Activated naive CD4-positive, alpha-beta T cell treated with anti-CD3 and anti-CD28 coated beads for 36 hours (primary cell): ENCODE measurements at regions of chr1 and their contacts with region 1.

Region 1: DNA sequence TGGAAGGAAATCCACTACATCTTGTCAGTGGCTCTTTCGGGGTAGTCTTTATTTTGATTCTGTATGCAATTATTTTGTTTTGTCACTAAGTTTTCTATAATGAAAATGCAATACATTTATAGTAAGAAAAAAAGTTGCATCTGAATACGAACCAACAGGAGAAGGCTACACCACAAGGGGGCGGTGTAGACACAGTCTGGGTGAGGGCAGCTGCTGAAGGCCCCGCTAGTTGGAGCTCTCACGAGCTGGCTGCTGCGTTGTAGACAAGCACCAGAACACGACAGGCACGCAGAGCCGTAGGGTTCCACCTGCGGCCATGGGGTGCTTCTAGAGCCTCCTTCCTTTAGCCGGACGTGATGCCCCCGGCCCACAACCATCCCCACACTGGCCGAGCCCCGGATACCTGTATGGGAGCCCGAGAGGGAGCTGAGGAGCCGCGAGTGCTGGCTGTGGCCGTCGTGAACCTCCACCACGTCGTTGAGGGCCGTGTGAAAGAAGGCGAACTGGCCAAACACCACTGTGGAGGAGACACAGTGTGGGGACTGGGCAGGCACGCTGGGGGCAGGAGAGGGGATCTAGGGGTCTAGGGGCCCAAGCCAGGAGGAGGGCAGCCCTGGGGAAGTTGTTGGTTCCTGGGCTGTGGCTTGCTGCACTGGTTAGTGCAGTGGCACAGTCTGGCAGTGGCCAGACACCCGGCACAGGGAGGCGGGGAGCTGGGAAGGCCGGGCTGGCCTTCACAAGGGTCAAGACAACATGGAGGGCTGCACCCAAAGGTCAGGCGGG is 160.8 kb downstream of the ZSCAN20 start:
- DNase-seq: peak; percentile 96
- H3K4me3 Mint-ChIP-seq: no peak overlapping the region
- H3K27ac Mint-ChIP-seq: no peak overlapping the region
- H3K4me1 Mint-ChIP-seq: no peaks in the 10 kb centered on the region
- H3K27me3 Mint-ChIP-seq: peaks cover 37% of the 10 kb centered on the region

Region 2: GRCh38 chr1:34162852-34163766 is 529.9 kb after region 1 on chr1:
- CTCF ChIA-PET with region 1: interaction called, 4 read pairs
- intact Hi-C with region 1: loop called (anchors 2 kb)
- DNase-seq: peak; percentile 55
- H3K4me3 Mint-ChIP-seq: peak overlapping the region; percentile 51
- H3K27ac Mint-ChIP-seq: no peak overlapping the region
- H3K4me1 Mint-ChIP-seq: peaks cover 10% of the 10 kb centered on the region
- H3K27me3 Mint-ChIP-seq: peaks cover 58% of the 10 kb centered on the region

Region 3: GRCh38 chr1:34597877-34598514 is 964.8 kb after region 1 on chr1:
- CTCF ChIA-PET with region 1: interaction called, 4 read pairs
- intact Hi-C with region 1: loop called (anchors 2 kb)
- DNase-seq: peak; percentile 73
- H3K4me3 Mint-ChIP-seq: no peak overlapping the region
- H3K27ac Mint-ChIP-seq: no peak overlapping the region
- H3K4me1 Mint-ChIP-seq: no peaks in the 10 kb centered on the region
- H3K27me3 Mint-ChIP-seq: peaks cover 17% of the 10 kb centered on the region

Region 4: GRCh38 chr1:34742667-34743270 is 1109.6 kb after region 1 on chr1:
- CTCF ChIA-PET with region 1: interaction called, 31 read pairs
- intact Hi-C with region 1: loop called (anchors 2 kb)
- DNase-seq: peak; percentile 86
- H3K4me3 Mint-ChIP-seq: no peak overlapping the region
- H3K27ac Mint-ChIP-seq: no peak overlapping the region
- H3K4me1 Mint-ChIP-seq: no peaks in the 10 kb centered on the region
- H3K27me3 Mint-ChIP-seq: no peaks in the 10 kb centered on the region